Mammary epithelial cell (primary cell): ENCODE measurements at regions of chr17 and their contacts with region 1.

Region 1: DNA sequence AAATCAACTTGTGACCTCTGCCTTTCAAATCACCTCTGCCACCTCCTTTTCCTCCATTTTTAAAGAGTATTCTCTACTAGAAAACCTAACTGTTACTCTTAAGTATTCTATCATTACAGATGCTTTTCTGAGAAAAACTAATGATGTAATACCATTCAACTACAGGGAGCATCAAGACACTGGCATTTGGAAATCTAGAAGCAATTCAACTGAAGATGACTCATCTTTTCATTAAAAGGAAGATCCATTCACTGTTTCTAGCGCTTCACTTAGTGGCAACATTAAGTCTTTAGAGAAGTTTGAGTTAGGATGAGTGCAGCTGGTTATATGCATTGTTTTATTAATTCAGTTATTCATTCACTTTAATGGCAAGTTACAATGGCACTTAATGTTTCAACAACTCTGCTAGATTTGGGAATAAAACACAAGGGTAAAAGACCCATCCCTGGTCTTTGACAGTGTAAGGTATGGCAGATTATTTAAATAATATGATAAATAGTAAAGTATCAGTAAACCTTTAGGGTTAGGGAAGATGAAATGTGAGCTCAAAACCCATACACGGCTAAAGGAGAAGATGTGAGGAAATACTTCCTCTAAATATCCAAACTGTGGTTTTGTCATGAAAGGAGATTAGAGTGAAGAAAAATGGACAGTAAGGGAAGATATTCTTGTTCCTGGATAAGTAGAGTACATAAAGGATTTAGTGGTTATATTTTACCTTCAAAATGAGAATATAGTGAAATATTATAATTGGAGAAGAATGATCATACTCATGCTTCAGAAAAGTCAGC is 61.7 kb downstream of the KCNJ2 start:
- DNase-seq: no peak
- H3K4me3 ChIP-seq: no peak overlapping the region
- H3K27ac ChIP-seq: no peak overlapping the region
- H3K4me1 ChIP-seq: no peaks in the 10 kb centered on the region
- H3K27me3 ChIP-seq: peaks cover 3% of the 10 kb centered on the region
- CTCF ChIP-seq: no peak

Region 2: GRCh38 chr17:70158180-70158579 is 72.9 kb before region 1 on chr17:
- CTCF ChIA-PET with region 1: no interaction called
- dilution Hi-C with region 1: no loop called
- in situ Hi-C with region 1: no loop called
- intact Hi-C with region 1: no loop called
- DNase-seq: no peak
- H3K4me3 ChIP-seq: no peak overlapping the region
- H3K27ac ChIP-seq: no peak overlapping the region
- H3K4me1 ChIP-seq: no peaks in the 10 kb centered on the region
- H3K27me3 ChIP-seq: no peaks in the 10 kb centered on the region
- CTCF ChIP-seq: no peak

Region 3: GRCh38 chr17:70270549-70270948 is 39.5 kb after region 1 on chr17:
- CTCF ChIA-PET with region 1: no interaction called
- dilution Hi-C with region 1: no loop called
- in situ Hi-C with region 1: no loop called
- intact Hi-C with region 1: no loop called
- DNase-seq: no peak
- H3K4me3 ChIP-seq: no peak overlapping the region
- H3K27ac ChIP-seq: no peak overlapping the region
- H3K4me1 ChIP-seq: peaks cover 9% of the 10 kb centered on the region
- H3K27me3 ChIP-seq: no peaks in the 10 kb centered on the region
- CTCF ChIP-seq: no peak

Region 4: DNA sequence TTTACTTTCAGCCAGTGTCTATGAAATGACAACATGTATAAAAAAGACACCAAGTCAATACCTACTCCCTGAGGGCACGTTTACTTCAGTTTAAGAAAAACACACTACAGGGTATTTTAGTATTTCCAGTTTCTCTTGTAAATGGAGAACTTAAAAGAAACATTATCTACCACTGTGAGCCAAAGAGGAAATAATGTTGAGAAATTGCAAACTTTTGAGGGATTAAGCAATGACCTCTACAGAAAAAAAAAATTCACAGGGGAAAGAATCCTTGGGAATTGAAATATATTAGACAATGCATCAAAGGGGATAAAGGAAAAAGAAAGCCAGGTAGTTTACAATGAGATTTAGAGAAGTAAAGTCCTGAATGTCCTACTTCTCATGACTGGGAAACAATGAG is 64.3 kb after region 1 on chr17:
- CTCF ChIA-PET with region 1: no interaction called
- dilution Hi-C with region 1: no loop called
- in situ Hi-C with region 1: no loop called
- intact Hi-C with region 1: no loop called
- DNase-seq: no peak
- H3K4me3 ChIP-seq: no peak overlapping the region
- H3K27ac ChIP-seq: no peak overlapping the region
- H3K4me1 ChIP-seq: no peaks in the 10 kb centered on the region
- H3K27me3 ChIP-seq: no peaks in the 10 kb centered on the region
- CTCF ChIP-seq: no peak

Region 5: DNA sequence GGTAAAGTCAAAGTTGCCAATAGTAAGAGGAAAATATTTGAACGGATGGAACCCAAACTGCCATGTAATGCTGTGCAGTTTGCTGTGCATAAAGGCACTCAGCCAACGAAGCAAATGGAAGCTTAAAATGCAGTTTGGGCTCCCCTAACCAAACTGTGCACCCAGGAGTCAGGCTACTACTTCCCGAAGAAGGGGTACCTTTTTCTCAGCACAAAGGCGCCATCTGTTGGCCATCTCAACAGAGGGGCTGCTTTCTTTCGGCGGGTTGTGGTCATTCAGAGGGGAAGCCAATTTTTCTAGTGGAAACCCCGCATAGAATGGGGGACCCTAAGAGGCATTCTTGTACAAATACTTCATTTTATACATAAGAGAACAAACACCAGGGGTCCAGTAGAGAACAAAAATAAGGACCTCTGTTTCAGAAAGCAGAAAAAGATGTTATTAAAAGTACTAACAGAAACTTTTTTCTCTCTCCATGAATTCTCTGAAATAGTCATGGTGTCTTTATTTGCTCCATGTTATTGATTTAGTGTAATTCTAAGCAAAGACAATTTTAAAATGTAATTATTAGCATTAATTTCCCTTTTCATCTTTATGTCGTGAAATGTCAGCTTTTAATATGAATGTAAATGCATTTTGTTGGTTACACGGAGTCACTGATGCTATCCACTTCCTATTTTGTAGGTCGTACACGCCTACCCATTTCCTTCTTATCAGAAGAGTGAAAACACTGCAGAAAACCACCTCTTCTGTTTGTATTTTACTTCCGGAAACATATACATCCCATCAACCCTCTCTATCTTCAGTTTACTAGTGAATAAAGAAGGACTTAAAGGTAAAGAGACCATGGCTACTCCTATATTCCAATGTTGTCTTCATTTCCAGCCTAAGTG is 391.6 kb after region 1 on chr17:
- CTCF ChIA-PET with region 1: no interaction called
- dilution Hi-C with region 1: no loop called
- in situ Hi-C with region 1: no loop called
- intact Hi-C with region 1: loop called (anchors 5 kb)
- DNase-seq: peak; percentile 30
- H3K4me3 ChIP-seq: no peak overlapping the region
- H3K27ac ChIP-seq: no peak overlapping the region
- H3K4me1 ChIP-seq: no peaks in the 10 kb centered on the region
- H3K27me3 ChIP-seq: no peaks in the 10 kb centered on the region
- CTCF ChIP-seq: peak; percentile 67 to 85